Lower leg skin (tissue), 4 donors: ENCODE measurements at regions of chr18 and their contacts with region 1.

Region 1: DNA sequence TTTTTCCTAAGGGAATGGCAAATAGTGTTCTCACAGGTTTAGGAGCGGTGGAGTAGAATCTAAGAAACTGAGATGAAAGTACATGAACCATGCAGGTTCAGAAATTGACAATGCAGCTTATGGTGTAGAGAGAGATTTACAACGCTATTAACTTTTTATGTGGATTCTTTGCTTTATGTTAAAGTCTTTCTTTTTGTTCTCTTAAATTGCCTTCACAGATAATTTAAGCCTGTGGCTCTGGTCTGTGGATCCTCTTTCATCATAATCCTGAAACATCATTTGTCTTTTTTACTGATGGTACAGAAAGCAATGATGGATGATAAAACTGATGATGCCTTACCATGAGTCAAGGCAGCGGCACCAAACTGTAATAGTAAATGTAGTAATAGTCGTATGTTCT is 30.3 kb downstream of the SOCS6 start:
- DNase-seq: no peak
- H3K4me3 ChIP-seq: no peak overlapping the region
- CTCF ChIP-seq: no peak
- POLR2A ChIP-seq: no peak

Region 2: GRCh38 chr18:70377317-70377799 is 58.2 kb after region 1 on chr18:
- intact Hi-C with region 1: loop called (anchors 1 kb)
- DNase-seq: no peak
- H3K4me3 ChIP-seq: no peak overlapping the region
- CTCF ChIP-seq: no peak
- POLR2A ChIP-seq: no peak